Prostate gland (tissue), 2 donors: ENCODE measurements at regions of chr17 and their contacts with region 1.

Region 1: GRCh38 chr17:82775001-82775823 is 23.3 kb downstream of the TBCD start:
- DNase-seq: peak; percentile 70
- H3K4me3 ChIP-seq: peak overlapping the region in 1 of 2 donors; percentile 7
- H3K27ac ChIP-seq: no peak overlapping the region
- H3K4me1 ChIP-seq: no peaks in the 10 kb centered on the region
- H3K27me3 ChIP-seq: no peaks in the 10 kb centered on the region
- CTCF ChIP-seq: peak; percentile 66 to 89 (median 82)
- POLR2A ChIP-seq: no peak

Region 2: GRCh38 chr17:82351716-82352488 is 423.3 kb before region 1 on chr17:
- intact Hi-C with region 1: loop called (anchors 10 kb)
- DNase-seq: peak; percentile 87
- H3K4me3 ChIP-seq: no peak overlapping the region
- H3K27ac ChIP-seq: no peak overlapping the region
- H3K4me1 ChIP-seq: no peaks in the 10 kb centered on the region
- H3K27me3 ChIP-seq: no peaks in the 10 kb centered on the region
- CTCF ChIP-seq: peak; percentile 94 to 100 (median 97)
- POLR2A ChIP-seq: no peak

Region 3: GRCh38 chr17:82668631-82669099 is 106.5 kb before region 1 on chr17:
- intact Hi-C with region 1: loop called (anchors 5 kb)
- DNase-seq: peak; percentile 62
- H3K4me3 ChIP-seq: no peak overlapping the region
- H3K27ac ChIP-seq: no peak overlapping the region
- H3K4me1 ChIP-seq: no peaks in the 10 kb centered on the region
- H3K27me3 ChIP-seq: no peaks in the 10 kb centered on the region
- CTCF ChIP-seq: peak in 3 of 4 experiments; percentile 38 to 76 (median 66)
- POLR2A ChIP-seq: no peak

Region 4: DNA sequence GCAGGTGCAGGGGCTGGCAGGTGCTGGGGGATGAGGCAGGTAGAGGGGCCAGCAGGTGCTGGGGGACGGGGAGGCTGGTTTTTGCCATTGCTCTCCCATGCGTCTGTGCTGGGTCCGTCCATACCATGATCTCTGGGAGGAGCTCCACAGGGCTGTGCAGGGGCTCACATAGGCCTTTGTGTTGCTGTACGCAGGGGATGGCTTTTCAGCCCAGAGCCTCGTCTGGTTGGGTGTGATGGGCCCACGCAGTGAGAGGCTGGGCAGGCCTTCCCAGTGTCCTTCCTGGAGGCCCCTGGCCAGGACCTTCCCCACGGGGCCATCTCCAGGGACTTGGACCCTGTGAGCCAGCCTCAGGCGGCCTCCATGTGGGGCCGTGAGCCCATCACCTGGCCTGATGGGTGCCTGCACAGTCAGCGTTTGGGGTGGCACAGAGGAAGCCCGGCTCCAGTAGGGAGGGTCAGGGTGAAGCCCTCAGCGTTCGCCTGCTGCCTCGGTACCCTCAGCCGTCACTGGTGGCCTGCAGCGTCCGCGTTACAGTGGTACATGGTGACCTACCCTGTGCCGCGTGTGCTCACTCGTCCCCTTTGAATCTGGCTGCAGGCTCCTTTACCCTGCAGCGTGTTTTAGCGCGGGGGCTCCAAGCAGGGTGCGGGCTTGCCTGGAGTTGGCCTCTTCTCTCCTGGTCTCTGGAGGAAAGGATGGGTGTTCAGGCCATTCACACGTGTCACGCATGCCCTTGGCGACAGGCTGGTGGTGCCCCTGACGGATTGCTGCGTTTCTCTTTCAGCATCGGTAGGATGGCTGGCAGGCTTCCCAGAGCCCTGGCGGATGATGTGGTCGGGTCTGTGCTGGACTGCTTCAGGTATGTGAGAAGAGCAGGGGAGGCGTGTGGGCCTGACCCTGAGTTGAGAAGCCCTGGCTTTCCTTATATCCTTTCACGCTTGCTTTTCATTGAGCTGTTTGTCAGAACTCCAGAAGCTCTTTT is 34.0 kb after region 1 on chr17:
- intact Hi-C with region 1: no loop called
- DNase-seq: no peak
- H3K4me3 ChIP-seq: no peak overlapping the region
- H3K27ac ChIP-seq: no peak overlapping the region
- H3K4me1 ChIP-seq: no peaks in the 10 kb centered on the region
- H3K27me3 ChIP-seq: no peaks in the 10 kb centered on the region
- CTCF ChIP-seq: no peak
- POLR2A ChIP-seq: no peak

Region 5: GRCh38 chr17:83012868-83013778 is 237.9 kb after region 1 on chr17:
- intact Hi-C with region 1: no loop called
- DNase-seq: no peak
- H3K4me3 ChIP-seq: no peak overlapping the region
- H3K27ac ChIP-seq: no peak overlapping the region
- H3K4me1 ChIP-seq: no peaks in the 10 kb centered on the region
- H3K27me3 ChIP-seq: no peaks in the 10 kb centered on the region
- CTCF ChIP-seq: no peak
- POLR2A ChIP-seq: no peak